ENCODE measurements at regions of chr11 and their contacts with region 1.

Region 1: GRCh38 chr11:11973361-11973800 is 35.0 kb downstream of the DKK3 start:
- DNase-seq: peak; percentile 90
- ATAC-seq: peak; percentile 89

Region 2: GRCh38 chr11:11987503-11988022 is 14.2 kb after region 1 on chr11:
- intact Hi-C with region 1: loop called (anchors 2 kb)
- DNase-seq: no peak
- ATAC-seq: no peak

Region 3: GRCh38 chr11:12008790-12009616 is 35.6 kb after region 1 on chr11:
- intact Hi-C with region 1: loop called (anchors 5 kb)
- DNase-seq: no peak
- ATAC-seq: peak; percentile 81

Region 4: GRCh38 chr11:12411806-12412727 is 438.7 kb after region 1 on chr11:
- intact Hi-C with region 1: no loop called
- DNase-seq: no peak
- ATAC-seq: peak; percentile 86